HEK293 (cell line): ENCODE measurements at regions of chr3 and their contacts with region 1.

Region 1: DNA sequence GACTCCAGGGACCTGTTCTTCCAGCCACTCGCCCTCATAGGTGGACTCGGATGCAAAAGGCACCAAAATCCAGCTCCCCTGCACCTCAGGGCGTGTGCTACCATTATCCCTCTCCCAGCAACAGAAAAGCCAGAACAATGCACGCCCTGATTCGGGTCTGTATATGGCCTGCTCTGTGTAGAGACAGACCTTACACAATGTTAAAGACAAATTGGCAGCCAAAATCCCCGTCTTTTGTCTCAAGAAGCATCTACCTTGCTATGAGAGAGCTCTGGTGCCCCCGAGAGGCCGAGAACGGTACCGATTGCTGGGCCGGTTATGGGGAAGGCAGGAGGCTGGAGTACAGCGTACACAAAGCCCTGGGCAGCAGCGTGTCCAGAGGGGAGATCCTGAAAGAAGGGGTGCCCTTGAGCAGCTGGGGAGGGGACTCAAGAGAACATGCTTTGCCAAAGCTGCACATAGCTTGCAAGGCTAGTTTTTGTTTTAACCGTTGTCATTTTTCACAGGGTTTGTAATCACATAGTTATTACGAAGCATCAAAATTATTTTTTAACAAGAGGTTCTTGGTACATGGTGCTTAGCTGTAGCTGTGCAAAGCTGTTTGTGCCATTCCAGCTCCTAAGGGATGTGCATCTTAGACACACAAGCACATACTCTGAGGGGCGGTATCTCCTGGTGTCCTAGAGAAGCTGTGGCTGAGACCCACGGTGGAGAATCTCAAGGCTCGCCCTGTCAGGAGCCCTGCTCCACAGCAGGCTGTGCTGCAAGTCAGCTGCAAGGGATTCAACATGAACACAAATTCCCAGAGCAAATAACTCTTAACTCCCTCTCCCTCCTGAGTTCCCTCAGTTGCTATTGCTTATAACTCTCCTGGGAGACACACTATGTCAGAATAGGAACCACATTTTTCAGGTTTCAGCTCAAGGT is 461.5 kb upstream of the PPP2R3A start:
- H3K4me3 ChIP-seq: no peak overlapping the region
- H3K27ac ChIP-seq: no peak overlapping the region
- H3K4me1 ChIP-seq: no peaks in the 10 kb centered on the region
- CTCF ChIP-seq: no peak

Region 2: GRCh38 chr3:134794950-134795745 is 708.9 kb before region 1 on chr3 and contains the start of gene EPHB1:
- CTCF ChIA-PET with region 1: interaction called, 47 read pairs
- POLR2A ChIA-PET with region 1: interaction called, 3 read pairs
- H3K4me3 ChIP-seq: peak within 1 kb of the TSS; percentile 47
- H3K27ac ChIP-seq: peak within 1 kb of the TSS; percentile 21; the same call in 1 of the 2 replicates
- H3K4me1 ChIP-seq: no peaks in the 10 kb centered on the region
- CTCF ChIP-seq: peak; percentile 65

Region 3: DNA sequence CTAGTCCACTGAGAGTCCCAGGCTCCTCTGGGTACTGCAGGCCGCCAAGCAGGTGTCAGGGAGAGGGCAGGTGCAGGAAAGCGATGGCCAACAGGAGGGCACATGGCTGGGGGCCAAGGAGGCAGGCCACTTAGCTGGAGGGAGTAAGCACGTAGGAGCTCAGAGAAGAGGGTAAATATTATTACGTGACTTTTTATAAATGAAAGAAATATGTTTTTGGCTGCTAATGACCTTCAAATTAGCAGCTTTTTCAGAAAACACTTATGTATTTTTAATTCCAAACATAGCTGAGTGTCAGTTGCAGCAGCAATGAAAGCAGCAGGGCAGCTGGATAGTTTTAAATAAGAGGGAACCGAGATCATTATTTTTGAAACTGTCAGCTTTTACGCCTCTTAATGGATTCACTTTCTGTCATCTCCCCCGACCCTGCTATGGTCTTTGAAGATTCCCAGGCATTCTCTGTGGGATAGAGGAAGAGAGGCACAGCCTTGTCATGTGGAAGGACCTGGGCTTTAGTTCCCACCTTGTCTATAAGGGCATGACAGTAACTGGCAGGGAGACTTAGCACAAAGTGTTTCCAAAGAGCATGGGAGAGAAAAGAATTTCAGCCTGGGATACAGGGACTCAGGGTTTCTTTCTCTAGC is 231.9 kb before region 1 on chr3:
- CTCF ChIA-PET with region 1: no interaction called
- POLR2A ChIA-PET with region 1: no interaction called
- H3K4me3 ChIP-seq: no peak overlapping the region
- H3K27ac ChIP-seq: no peak overlapping the region
- H3K4me1 ChIP-seq: no peaks in the 10 kb centered on the region
- CTCF ChIP-seq: no peak